WTC11 (cell line): ENCODE measurements at regions of chr1 and their contacts with region 1.

Region 1: DNA sequence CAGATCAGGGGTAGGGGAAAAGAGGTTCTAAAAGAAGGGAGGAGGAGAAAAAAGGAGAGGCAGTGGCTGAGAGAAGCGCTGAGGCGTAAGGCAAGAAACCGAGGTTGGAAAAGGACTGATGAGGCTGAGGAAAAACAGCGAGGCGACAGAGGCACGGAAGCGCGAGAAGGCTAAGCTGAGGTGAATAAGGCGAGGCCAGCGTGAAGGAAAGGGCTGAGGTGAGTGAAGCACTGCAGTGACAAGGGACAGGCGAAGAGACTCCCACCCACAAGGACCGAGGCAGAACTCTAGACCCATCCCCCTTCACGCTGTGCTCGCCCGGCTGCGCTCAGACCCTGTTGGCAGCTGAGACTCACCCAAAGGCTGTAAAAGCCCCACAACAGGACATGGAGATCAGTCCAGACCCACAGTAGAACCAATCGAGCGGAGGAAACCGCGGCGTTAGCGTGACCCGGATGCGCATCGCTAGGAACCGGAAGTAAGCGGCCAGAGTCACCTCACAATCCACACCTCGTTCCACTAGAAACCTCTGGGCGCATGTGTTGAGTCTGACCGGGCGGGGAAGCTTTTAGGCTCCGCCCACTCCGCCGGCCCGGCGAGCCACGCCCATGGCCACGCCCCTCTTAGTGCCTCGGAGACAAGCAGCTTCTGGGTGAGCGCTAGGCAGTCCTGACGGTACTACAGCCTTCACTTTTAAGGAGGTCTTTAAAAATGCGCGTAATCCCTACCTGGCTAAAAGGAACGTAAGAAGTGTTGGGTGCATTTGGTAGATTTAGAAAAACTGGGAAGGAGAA is at the start of gene EYA3:
- DNase-seq: peak; percentile 100
- ATAC-seq: peak; percentile 93
- H3K4me3 Mint-ChIP-seq: peak within 1 kb of the TSS; percentile 96
- H3K27ac Mint-ChIP-seq: peak within 1 kb of the TSS; percentile 100
- H3K4me1 Mint-ChIP-seq: peaks cover 10% of the 10 kb centered on the region
- H3K27me3 Mint-ChIP-seq: no peaks in the 10 kb centered on the region
- CTCF ChIP-seq: no peak
- total RNA-seq, gene EYA3: 27.4 to 29.4 TPM (median 28.1 TPM) in 3 replicates

Region 2: DNA sequence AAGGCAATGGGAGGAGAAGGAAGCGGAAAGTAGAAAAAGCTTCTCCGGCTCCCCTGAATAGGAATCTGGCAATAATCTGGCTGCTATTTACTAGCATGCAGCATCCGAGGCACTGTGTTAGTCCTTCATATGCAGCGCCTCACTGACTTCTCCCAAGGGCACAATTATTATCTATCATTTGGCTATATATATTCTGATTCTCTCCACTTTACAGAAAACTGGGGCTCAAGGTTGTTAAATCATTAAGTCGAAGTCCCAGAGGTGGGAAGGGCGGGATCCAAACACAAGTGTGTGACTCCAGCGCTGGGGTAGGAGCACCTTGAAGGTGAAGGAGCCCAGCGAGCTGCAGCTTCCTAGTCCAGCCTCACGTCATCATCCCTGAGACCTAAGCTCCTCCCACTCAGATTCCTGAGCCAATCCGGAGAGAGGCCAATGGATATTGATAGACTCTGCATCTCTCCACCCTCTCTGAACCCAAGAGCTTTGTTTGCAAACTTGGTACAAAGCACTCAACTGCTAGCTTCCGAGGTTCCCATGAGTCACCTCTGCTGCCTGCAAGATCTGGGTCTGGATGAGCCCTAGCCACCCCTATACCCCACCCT is 16.6 kb after region 1 on chr1:
- CTCF ChIA-PET with region 1: interaction called, 39 read pairs
- POLR2A ChIA-PET with region 1: interaction called, 13 read pairs
- DNase-seq: peak; percentile 75
- ATAC-seq: peak; percentile 100
- H3K4me3 Mint-ChIP-seq: peak overlapping the region; percentile 65
- H3K27ac Mint-ChIP-seq: peak overlapping the region; percentile 95
- H3K4me1 Mint-ChIP-seq: peaks cover 12% of the 10 kb centered on the region
- H3K27me3 Mint-ChIP-seq: no peaks in the 10 kb centered on the region
- CTCF ChIP-seq: no peak

Region 3: DNA sequence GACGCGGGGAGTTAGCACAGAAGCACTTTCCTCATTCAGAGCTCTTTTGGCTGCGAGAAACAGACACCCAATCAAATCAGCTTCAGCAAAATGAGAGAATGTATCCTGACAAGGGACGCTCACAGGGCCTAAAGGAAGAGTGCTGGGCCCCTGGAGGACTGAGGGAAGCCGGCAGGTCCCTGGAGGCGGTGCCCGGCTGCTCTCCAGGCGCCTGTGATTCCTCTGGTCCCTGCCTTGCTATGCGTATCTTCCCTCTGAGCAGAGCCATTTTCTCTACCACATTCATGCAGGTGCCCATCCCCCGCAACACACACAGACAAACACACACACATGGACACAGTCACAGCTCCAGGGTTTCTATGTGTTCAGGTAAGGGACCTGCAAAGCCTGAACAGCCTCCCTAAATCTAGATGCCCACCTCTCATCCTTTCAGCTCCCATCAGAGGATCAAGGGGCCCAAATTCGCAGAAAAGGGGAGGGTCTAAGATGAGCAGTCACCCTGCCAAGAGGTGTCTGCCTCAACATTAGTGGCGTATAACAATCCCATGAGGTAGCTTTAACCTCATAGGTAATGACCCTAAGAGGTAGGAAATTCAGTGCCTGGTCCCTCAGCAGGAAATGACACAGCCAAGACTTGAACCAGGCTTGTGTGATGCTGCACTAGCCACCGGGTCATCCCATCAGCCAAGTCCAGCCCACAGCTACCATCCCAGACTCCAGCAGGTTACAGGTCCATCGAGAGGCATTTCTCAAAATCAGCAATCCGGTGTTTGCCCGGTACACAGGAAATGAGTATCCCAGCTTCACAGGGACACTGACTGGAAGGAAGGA is 59.1 kb after region 1 on chr1:
- CTCF ChIA-PET with region 1: interaction called, 13 read pairs
- POLR2A ChIA-PET with region 1: no interaction called
- DNase-seq: peak; percentile 31
- ATAC-seq: peak; percentile 69
- H3K4me3 Mint-ChIP-seq: no peak overlapping the region
- H3K27ac Mint-ChIP-seq: peak overlapping the region; percentile 65
- H3K4me1 Mint-ChIP-seq: peaks cover 18% of the 10 kb centered on the region
- H3K27me3 Mint-ChIP-seq: no peaks in the 10 kb centered on the region
- CTCF ChIP-seq: no peak

Region 4: GRCh38 chr1:28194326-28195035 is 106.1 kb after region 1 on chr1:
- CTCF ChIA-PET with region 1: interaction called, 25 read pairs
- POLR2A ChIA-PET with region 1: interaction called, 4 read pairs
- DNase-seq: no peak
- ATAC-seq: no peak
- H3K4me3 Mint-ChIP-seq: no peak overlapping the region
- H3K27ac Mint-ChIP-seq: no peak overlapping the region
- H3K4me1 Mint-ChIP-seq: peaks cover 33% of the 10 kb centered on the region
- H3K27me3 Mint-ChIP-seq: no peaks in the 10 kb centered on the region
- CTCF ChIP-seq: no peak